Mammary epithelial cell (primary cell): ENCODE measurements at regions of chr6 and their contacts with region 1.

Region 1: DNA sequence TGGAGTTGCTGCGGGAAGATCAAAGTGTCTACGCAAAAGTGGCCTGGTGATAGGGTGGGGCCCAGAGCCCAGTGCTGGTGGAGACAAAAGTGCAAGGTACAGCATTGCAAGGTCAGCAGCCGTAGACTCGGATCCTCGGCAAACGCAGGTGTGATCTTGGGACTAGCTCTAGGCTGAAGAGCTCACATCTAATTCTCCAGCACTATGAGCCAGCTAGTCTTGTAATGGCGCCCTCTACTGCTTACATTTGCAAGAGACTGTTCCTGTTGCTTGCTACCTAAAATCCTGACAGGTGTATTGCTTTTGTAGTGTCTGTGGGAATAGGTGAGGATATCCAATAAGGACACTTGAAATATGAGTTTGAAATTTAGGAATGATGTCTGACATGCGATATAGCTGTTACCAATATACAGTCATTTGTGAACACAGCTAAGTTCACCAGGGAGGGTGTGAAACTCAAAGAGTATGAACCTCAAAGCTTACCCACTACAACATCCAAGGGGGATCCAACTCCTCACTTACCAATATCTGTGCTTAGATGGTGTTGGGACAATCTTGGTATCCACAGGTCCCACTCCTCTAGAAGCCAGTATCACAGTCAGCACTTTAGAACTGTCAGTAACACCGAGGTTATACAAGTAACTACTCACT is 58.4 kb downstream of the PDE7B start:
- DNase-seq: peak; percentile 54
- H3K4me3 ChIP-seq: no peak overlapping the region
- H3K27ac ChIP-seq: no peak overlapping the region
- H3K4me1 ChIP-seq: peaks cover 6% of the 10 kb centered on the region
- H3K27me3 ChIP-seq: no peaks in the 10 kb centered on the region
- CTCF ChIP-seq: peak; percentile 69 to 80

Region 2: DNA sequence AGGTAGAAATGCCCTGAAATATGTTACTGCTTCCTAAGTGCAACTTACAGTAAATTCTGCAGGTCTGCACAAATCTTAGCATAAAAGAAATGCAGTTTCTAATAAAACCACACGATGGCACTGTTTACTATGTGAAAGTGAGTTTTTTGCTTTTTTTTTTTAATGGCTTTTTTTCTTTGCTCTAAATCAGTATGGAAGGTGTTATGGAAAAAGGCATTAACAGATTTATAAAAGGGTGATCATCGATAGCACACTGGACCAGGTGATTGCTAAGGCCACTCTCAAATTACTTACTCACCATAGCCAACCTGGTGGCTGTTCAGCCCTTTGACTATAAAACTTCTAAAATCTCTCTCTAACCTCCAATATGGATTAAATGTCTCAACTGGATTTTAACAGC is 458.2 kb before region 1 on chr6:
- CTCF ChIA-PET with region 1: no interaction called
- dilution Hi-C with region 1: no loop called
- in situ Hi-C with region 1: no loop called
- intact Hi-C with region 1: loop called (anchors 5 kb)
- DNase-seq: peak; percentile 10
- H3K4me3 ChIP-seq: no peak overlapping the region
- H3K27ac ChIP-seq: no peak overlapping the region
- H3K4me1 ChIP-seq: no peaks in the 10 kb centered on the region
- H3K27me3 ChIP-seq: no peaks in the 10 kb centered on the region
- CTCF ChIP-seq: peak; percentile 60 to 62

Region 3: GRCh38 chr6:135675862-135676261 is 234.0 kb before region 1 on chr6:
- CTCF ChIA-PET with region 1: no interaction called
- dilution Hi-C with region 1: no loop called
- in situ Hi-C with region 1: no loop called
- intact Hi-C with region 1: loop called (anchors 10 kb)
- DNase-seq: peak; percentile 3
- H3K4me3 ChIP-seq: no peak overlapping the region
- H3K27ac ChIP-seq: no peak overlapping the region
- H3K4me1 ChIP-seq: no peaks in the 10 kb centered on the region
- H3K27me3 ChIP-seq: peaks cover 2% of the 10 kb centered on the region
- CTCF ChIP-seq: no peak